ENCODE measurements at regions of chr6 and their contacts with region 1.

Region 1: DNA sequence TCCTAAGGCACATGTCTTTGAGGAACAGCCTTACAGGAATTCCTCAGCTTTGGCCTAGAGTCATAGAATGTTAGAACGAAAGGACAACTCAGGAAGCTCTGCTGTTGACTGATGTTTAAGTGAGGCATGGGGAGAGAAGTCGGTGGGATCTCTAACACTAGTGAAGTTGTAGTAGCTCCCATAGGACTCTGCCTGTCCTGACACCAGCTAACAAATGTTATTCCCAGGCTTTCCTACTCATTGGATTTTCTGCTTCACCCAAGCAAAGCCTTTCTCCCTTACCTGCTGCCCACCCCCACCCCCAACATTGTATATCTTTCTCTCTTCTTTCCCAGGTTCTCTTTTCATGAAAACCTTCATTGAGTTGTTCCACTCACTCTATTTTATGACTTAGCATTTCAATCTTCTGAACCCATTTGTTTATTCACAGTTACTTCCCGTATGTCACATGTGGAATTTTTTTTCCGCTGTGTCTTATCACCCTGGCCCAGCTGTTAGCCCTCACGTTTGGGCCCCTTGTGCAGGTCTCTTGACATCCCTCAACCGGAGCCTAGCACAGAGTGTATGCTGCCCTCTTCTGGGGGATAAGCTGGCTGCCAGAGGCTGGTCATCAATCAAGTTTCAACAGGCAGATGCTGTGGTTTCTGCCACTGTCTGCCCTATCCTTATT is 39.2 kb upstream of the RNF8 start:
- DNase-seq: peak; percentile 71
- ATAC-seq: peak; percentile 84
- H3K4me3 Mint-ChIP-seq: no peak overlapping the region
- H3K27ac Mint-ChIP-seq: no peak overlapping the region
- H3K4me1 Mint-ChIP-seq: peaks cover 20% of the 10 kb centered on the region
- H3K27me3 Mint-ChIP-seq: no peaks in the 10 kb centered on the region

Region 2: GRCh38 chr6:37029249-37029971 is 285.2 kb before region 1 on chr6:
- CTCF ChIA-PET with region 1: interaction called, 10 read pairs
- POLR2A ChIA-PET with region 1: no interaction called
- DNase-seq: peak; percentile 64
- ATAC-seq: peak; percentile 62
- H3K4me3 Mint-ChIP-seq: no peak overlapping the region
- H3K27ac Mint-ChIP-seq: peak overlapping the region; percentile 75
- H3K4me1 Mint-ChIP-seq: peaks cover 84% of the 10 kb centered on the region
- H3K27me3 Mint-ChIP-seq: no peaks in the 10 kb centered on the region

Region 3: GRCh38 chr6:37222125-37222967 is 92.3 kb before region 1 on chr6:
- CTCF ChIA-PET with region 1: interaction called, 13 read pairs
- POLR2A ChIA-PET with region 1: no interaction called
- DNase-seq: peak; percentile 86
- ATAC-seq: peak; percentile 97
- H3K4me3 Mint-ChIP-seq: peak overlapping the region; percentile 81
- H3K27ac Mint-ChIP-seq: peak overlapping the region; percentile 65
- H3K4me1 Mint-ChIP-seq: peaks cover 38% of the 10 kb centered on the region
- H3K27me3 Mint-ChIP-seq: no peaks in the 10 kb centered on the region

Region 4: DNA sequence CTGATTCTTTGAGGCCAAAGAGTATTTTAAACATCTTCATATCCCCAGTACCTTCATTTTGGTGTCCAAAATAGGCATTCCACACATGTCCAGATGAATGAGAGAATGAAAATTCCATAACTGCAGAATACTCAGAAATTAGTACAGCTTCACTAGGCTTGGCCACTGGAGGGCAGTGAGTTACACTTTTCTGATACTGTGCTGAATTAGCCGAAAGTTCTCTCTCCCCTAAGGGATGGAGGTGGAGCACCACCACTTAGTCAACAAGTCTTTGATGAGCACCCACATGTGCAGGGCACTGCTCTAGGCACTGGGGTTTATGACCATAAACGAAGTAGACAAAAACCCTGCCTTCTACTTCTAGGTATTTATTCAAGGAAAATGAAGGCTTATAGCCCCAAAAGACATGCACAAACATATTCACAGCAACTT is 10.7 kb before region 1 on chr6:
- CTCF ChIA-PET with region 1: interaction called, 26 read pairs
- POLR2A ChIA-PET with region 1: no interaction called
- DNase-seq: peak; percentile 33
- ATAC-seq: no peak
- H3K4me3 Mint-ChIP-seq: no peak overlapping the region
- H3K27ac Mint-ChIP-seq: no peak overlapping the region
- H3K4me1 Mint-ChIP-seq: peaks cover 9% of the 10 kb centered on the region
- H3K27me3 Mint-ChIP-seq: no peaks in the 10 kb centered on the region

Region 5: DNA sequence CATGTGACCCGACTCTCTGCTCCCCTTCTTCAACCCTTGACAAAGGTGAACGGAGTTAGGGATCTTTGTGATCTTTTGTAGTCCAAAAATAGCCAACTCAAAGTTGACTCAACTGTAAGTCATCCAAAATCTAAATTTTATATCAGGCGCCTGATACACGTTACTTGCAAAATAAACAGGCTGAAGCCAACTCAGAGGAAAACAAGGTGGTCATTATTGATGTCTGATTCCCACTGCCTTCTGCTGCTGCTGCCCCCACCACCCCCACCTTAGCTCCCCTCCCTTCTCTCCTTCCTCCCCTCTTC is 26.0 kb after region 1 on chr6:
- CTCF ChIA-PET with region 1: no interaction called
- POLR2A ChIA-PET with region 1: no interaction called
- DNase-seq: no peak
- ATAC-seq: no peak
- H3K4me3 Mint-ChIP-seq: no peak overlapping the region
- H3K27ac Mint-ChIP-seq: no peak overlapping the region
- H3K4me1 Mint-ChIP-seq: peaks cover 5% of the 10 kb centered on the region
- H3K27me3 Mint-ChIP-seq: peaks cover 16% of the 10 kb centered on the region

Region 6: DNA sequence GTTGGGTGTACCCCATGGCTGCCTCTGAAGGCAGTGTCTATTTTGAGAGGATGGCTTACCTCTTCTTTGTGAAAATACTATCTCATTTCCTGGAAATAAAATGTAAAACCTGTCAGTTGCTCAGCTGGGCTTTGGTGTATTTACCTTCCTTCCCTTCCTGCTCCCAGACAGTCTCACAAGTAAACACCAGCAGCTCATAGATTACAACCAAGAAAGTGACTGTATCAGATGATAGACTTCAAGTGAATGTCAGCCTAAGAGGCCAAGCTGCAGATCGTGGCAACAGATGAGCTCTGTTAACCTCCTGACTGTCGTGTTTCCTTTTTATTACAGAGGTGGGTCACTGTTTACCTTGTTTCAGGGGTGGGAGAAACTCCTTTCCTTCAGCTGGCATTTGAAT is 76.5 kb after region 1 on chr6:
- CTCF ChIA-PET with region 1: no interaction called
- POLR2A ChIA-PET with region 1: no interaction called
- DNase-seq: no peak
- ATAC-seq: peak; percentile 33
- H3K4me3 Mint-ChIP-seq: no peak overlapping the region
- H3K27ac Mint-ChIP-seq: peak overlapping the region; percentile 30
- H3K4me1 Mint-ChIP-seq: peaks cover 4% of the 10 kb centered on the region
- H3K27me3 Mint-ChIP-seq: no peaks in the 10 kb centered on the region

Region 7: GRCh38 chr6:37451441-37452193 is 137.0 kb after region 1 on chr6:
- CTCF ChIA-PET with region 1: no interaction called
- POLR2A ChIA-PET with region 1: no interaction called
- DNase-seq: no peak
- ATAC-seq: no peak
- H3K4me3 Mint-ChIP-seq: no peak overlapping the region
- H3K27ac Mint-ChIP-seq: peak overlapping the region; percentile 50
- H3K4me1 Mint-ChIP-seq: peaks cover 3% of the 10 kb centered on the region
- H3K27me3 Mint-ChIP-seq: no peaks in the 10 kb centered on the region